ENCODE measurements at regions of chr19 and their contacts with region 1.

Region 1: GRCh38 chr19:2768365-2769132 is 14.5 kb downstream of the SGTA start:
- DNase-seq: no peak
- H3K4me3 ChIP-seq: no peak overlapping the region
- H3K27ac ChIP-seq: no peak overlapping the region
- H3K4me1 ChIP-seq: peaks cover 10% of the 10 kb centered on the region
- H3K27me3 ChIP-seq: no peaks in the 10 kb centered on the region
- CTCF ChIP-seq: no peak
- EP300 ChIP-seq: no peak
- POLR2A ChIP-seq: no peak

Region 2: DNA sequence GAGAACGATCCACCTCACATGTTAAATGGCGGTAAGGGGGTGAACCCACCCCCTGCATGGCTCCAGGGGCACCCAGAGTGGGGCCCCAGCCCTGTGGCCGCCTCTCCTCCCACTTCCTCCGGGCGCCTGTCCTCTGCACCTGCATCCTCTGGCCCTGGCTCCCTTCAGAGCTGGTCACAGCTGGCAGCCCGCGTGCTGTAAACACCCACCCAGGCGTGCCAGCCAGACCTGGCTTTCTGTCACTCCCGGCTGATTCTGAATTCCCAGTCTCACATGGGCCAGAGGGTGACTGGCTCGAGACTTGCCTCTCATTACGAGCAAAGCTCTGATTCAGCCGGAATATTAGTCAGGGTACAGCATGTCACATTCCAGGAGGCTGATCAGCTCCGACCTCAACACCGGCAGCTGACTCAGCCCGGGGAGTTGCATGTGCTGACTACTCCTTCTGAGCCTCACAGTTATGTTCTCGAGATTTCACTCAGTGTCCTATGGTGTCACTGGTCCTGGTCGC is 141.2 kb before region 1 on chr19:
- intact Hi-C with region 1: no loop called
- DNase-seq: peak in 3 of 5 donors; percentile 59 to 67 (median 65)
- H3K4me3 ChIP-seq: no peak overlapping the region
- H3K27ac ChIP-seq: peak overlapping the region in 1 of 2 donors; percentile 58
- H3K4me1 ChIP-seq: no peaks in the 10 kb centered on the region
- H3K27me3 ChIP-seq: no peaks in the 10 kb centered on the region
- CTCF ChIP-seq: no peak
- EP300 ChIP-seq: peak; percentile 81
- POLR2A ChIP-seq: no peak

Region 3: GRCh38 chr19:2699413-2700140 is 69.0 kb before region 1 on chr19:
- intact Hi-C with region 1: loop called in 1 of 4 experiments (anchors 5 kb)
- DNase-seq: no peak
- H3K4me3 ChIP-seq: no peak overlapping the region
- H3K27ac ChIP-seq: no peak overlapping the region
- H3K4me1 ChIP-seq: peaks cover 16% of the 10 kb centered on the region
- H3K27me3 ChIP-seq: no peaks in the 10 kb centered on the region
- CTCF ChIP-seq: no peak
- EP300 ChIP-seq: no peak
- POLR2A ChIP-seq: no peak

Region 4: DNA sequence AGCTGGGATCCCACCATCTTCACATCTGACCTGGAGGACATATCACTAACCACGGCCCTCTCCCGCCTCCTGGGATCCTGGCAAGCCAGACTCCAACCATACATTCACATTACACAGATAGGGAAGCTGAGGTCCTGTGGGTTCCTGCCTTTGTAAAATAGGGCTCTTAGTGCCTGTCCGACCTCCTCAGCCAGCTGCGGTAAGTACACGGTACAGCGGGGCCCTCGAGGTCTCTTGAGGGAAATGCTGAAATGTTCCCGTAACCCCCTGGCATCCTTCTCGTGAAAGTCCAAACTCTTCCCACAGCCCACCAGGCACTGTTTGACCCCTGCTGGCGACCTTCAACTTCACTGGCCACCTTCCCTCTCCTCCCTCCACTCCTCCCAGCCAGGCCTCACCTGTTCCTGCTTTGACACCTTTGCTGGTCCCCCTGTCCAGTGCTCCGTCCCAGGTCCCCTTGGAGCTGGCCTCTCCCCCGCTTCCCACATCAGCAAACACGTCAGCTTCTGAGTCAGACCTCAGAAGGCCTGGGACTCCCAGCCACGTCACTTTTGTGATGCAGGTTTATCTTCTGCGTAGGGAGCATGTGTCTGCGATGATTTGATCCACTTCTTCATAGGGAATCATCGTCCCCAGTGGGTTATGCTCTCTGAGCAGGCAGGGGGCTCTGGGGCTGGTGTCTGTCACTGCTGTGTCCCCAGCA is 57.2 kb before region 1 on chr19:
- intact Hi-C with region 1: no loop called
- DNase-seq: no peak
- H3K4me3 ChIP-seq: no peak overlapping the region
- H3K27ac ChIP-seq: no peak overlapping the region
- H3K4me1 ChIP-seq: no peaks in the 10 kb centered on the region
- H3K27me3 ChIP-seq: no peaks in the 10 kb centered on the region
- CTCF ChIP-seq: no peak
- EP300 ChIP-seq: no peak
- POLR2A ChIP-seq: no peak